Activated B cell treated with CpG ODN at 0.5 μM for 24 hours (primary cell): ENCODE measurements at regions of chr7 and their contacts with region 1.

Region 1: GRCh38 chr7:114865564-114865963 is 56.3 kb upstream of the MDFIC start:
- DNase-seq: peak; percentile 29
- ATAC-seq: peak; percentile 81
- H3K4me3 Mint-ChIP-seq: no peak overlapping the region
- H3K27ac Mint-ChIP-seq: no peak overlapping the region
- H3K4me1 Mint-ChIP-seq: peaks cover 10% of the 10 kb centered on the region
- H3K27me3 Mint-ChIP-seq: no peaks in the 10 kb centered on the region
- CTCF ChIP-seq: peak; percentile 92

Region 2: GRCh38 chr7:114922016-114922651 is 56.6 kb after region 1 on chr7 and contains the start of gene MDFIC:
- CTCF ChIA-PET with region 1: interaction called, 28 read pairs
- POLR2A ChIA-PET with region 1: interaction called, 12 read pairs
- intact Hi-C with region 1: no loop called
- DNase-seq: peak; percentile 66
- ATAC-seq: peak; percentile 63
- H3K4me3 Mint-ChIP-seq: peak within 1 kb of the TSS; percentile 95
- H3K27ac Mint-ChIP-seq: peak within 1 kb of the TSS; percentile 97
- H3K4me1 Mint-ChIP-seq: peaks cover 70% of the 10 kb centered on the region
- H3K27me3 Mint-ChIP-seq: no peaks in the 10 kb centered on the region
- CTCF ChIP-seq: no peak
- total RNA-seq, gene MDFIC: 139 and 160 TPM in 2 replicates

Region 3: DNA sequence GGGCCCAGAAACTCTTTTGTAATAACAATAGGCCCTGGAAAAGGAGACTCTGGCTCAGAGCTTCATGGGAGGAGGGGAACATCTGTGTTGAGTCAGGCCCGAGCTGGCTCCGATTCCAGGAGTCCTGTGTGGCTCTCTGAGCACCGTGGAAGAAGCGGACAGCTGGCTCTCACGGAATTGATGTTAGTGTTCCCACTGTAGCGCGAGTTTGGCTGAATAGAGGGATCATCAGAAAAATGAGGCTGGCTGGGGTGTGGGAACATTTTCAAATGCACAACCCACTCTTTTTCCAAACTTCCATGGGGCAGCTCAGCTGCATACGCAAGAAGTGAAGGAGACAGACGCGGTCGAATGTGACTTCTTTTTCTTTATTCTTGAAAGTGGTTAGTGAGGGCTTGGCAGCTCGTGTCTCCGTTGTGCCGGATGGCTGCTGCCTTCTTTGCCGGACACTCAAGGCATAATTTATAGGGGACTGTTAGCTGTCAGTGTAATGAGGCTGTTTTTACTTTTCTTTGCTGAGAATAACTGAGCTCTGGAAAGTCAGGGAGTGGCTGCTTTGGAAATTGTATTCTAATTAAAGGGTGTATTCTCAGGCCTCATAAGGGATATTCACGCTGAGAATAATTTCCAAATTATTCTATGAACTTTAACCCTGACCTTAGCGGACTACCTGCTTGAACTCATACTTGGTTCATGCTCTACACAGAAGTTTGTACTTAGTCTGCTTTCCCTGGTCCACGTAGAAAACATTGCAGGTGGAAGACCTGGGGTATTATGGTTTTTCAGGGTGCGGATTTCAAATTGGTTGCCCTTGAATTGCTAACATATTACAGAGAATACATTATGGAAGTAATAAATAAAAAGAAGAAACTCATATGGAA is 79.4 kb after region 1 on chr7:
- CTCF ChIA-PET with region 1: interaction called, 40 read pairs
- POLR2A ChIA-PET with region 1: no interaction called
- intact Hi-C with region 1: no loop called
- DNase-seq: no peak
- ATAC-seq: no peak
- H3K4me3 Mint-ChIP-seq: no peak overlapping the region
- H3K27ac Mint-ChIP-seq: peak overlapping the region; percentile 35
- H3K4me1 Mint-ChIP-seq: peaks cover 78% of the 10 kb centered on the region
- H3K27me3 Mint-ChIP-seq: no peaks in the 10 kb centered on the region
- CTCF ChIP-seq: no peak

Region 4: DNA sequence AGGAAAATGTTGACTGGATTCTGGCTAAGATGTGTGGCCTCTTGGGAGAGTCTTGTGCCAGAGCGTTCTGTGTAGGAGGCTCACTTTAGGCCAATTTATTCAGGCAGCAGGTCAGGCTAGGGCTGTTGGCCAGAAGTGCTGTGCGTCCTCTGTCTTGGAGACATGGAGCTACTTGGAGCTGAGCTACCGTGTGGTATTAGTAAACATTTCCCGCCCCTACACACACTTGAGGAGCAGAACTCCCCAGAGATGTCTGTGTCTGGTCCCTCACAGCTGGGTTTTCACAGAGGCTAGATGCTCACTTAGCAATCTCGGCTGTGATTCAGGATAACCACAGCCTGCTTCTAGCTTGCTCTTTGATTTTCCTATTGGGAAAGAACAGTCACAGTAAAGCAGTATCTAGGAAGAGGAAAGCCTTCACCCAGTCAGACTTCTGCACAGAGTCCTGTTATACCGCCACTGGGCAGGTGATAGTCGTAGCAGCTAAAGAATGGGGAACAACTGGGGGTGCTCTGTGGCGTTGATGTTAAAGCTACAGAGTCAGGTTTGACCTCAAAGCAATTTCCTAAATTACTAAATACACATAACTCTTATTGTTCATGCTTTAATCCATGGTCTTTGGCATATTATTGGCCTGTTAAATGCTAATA is 143.0 kb after region 1 on chr7:
- CTCF ChIA-PET with region 1: interaction called, 6 read pairs
- POLR2A ChIA-PET with region 1: no interaction called
- intact Hi-C with region 1: loop called (anchors 2 kb)
- DNase-seq: no peak
- ATAC-seq: peak; percentile 50
- H3K4me3 Mint-ChIP-seq: peak overlapping the region; percentile 28
- H3K27ac Mint-ChIP-seq: peak overlapping the region; percentile 59
- H3K4me1 Mint-ChIP-seq: peaks cover 24% of the 10 kb centered on the region
- H3K27me3 Mint-ChIP-seq: no peaks in the 10 kb centered on the region
- CTCF ChIP-seq: no peak

Region 5: DNA sequence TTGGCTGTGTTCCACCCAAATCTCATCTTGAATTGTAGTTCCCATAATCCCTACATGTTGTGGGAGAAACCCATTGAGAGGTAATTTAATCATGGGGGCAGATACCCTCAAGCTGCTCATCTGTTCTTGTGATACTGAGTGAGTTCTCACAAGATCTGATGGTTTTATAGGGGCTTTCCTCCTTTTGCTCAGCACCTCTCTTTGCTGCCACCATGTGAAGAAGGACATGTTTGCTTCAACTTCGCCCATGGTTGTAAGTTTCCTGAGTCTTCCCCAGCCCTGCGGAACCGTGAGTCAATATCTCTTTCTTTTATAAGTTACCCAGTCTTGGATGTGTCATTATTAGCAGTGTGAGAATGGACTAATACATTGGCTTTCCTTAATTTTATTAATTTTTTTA is 584.1 kb after region 1 on chr7:
- CTCF ChIA-PET with region 1: interaction called, 3 read pairs
- POLR2A ChIA-PET with region 1: no interaction called
- intact Hi-C with region 1: loop called (anchors 1 kb)
- DNase-seq: no peak
- ATAC-seq: no peak
- H3K4me3 Mint-ChIP-seq: no peak overlapping the region
- H3K27ac Mint-ChIP-seq: no peak overlapping the region
- H3K4me1 Mint-ChIP-seq: no peaks in the 10 kb centered on the region
- H3K27me3 Mint-ChIP-seq: peaks cover 8% of the 10 kb centered on the region
- CTCF ChIP-seq: no peak

Region 6: GRCh38 chr7:115707258-115708012 is 841.9 kb after region 1 on chr7:
- CTCF ChIA-PET with region 1: interaction called, 11 read pairs
- POLR2A ChIA-PET with region 1: no interaction called
- intact Hi-C with region 1: loop called (anchors 10 kb)
- DNase-seq: no peak
- ATAC-seq: no peak
- H3K4me3 Mint-ChIP-seq: no peak overlapping the region
- H3K27ac Mint-ChIP-seq: no peak overlapping the region
- H3K4me1 Mint-ChIP-seq: no peaks in the 10 kb centered on the region
- H3K27me3 Mint-ChIP-seq: no peaks in the 10 kb centered on the region
- CTCF ChIP-seq: no peak